ENCODE measurements at regions of chr19 and their contacts with region 1.

Region 1: GRCh38 chr19:39846176-39846677 is at the start of gene FBL:
- DNase-seq: peak; percentile 99
- ATAC-seq: peak; percentile 95
- total RNA-seq, gene FBL: 64.8 TPM

Region 2: GRCh38 chr19:39792999-39793546 is 53.2 kb before region 1 on chr19:
- intact Hi-C with region 1: loop called (anchors 1 kb)
- DNase-seq: peak; percentile 89
- ATAC-seq: peak; percentile 96

Region 3: GRCh38 chr19:39970425-39970674 is 124.1 kb after region 1 on chr19:
- intact Hi-C with region 1: no loop called
- DNase-seq: no peak
- ATAC-seq: no peak

Measured in Right ventricle myocardium inferior (tissue), 1 donor.